Colonic mucosa (tissue), 4 donors: ENCODE measurements at regions of chr1 and their contacts with region 1.

Region 1: GRCh38 chr1:100921109-100921706 is 25.3 kb downstream of the SLC30A7 start:
- DNase-seq: no peak
- H3K4me3 ChIP-seq: no peak overlapping the region
- H3K27ac ChIP-seq: no peak overlapping the region
- H3K4me1 ChIP-seq: no peaks in the 10 kb centered on the region
- H3K27me3 ChIP-seq: no peaks in the 10 kb centered on the region
- CTCF ChIP-seq: peak; percentile 71

Region 2: DNA sequence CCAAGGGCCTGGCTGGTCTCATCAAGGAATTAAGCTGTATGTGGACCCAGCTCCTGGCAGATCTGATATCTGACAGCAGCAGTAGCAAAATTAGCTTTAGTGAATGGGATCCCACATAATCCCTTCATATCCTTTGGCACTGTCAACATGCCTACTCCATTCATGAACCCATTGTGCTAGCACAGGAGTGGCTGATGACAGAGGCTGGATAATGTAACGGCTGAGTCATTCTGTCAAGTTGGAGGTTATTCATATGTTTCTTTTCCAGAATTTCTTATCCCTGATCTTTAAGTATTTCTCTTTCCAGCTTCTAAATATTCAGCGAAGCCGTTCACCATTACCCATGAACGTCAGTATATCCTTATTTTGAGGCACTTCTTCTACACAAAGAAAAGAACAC is 110.8 kb before region 1 on chr1:
- intact Hi-C with region 1: no loop called
- DNase-seq: no peak
- H3K4me3 ChIP-seq: no peak overlapping the region
- H3K27ac ChIP-seq: no peak overlapping the region
- H3K4me1 ChIP-seq: no peaks in the 10 kb centered on the region
- H3K27me3 ChIP-seq: no peaks in the 10 kb centered on the region
- CTCF ChIP-seq: no peak

Region 3: GRCh38 chr1:101039245-101039644 is 118.0 kb after region 1 on chr1:
- intact Hi-C with region 1: loop called (anchors 10 kb)
- DNase-seq: no peak
- H3K4me3 ChIP-seq: no peak overlapping the region
- H3K27ac ChIP-seq: no peak overlapping the region
- H3K4me1 ChIP-seq: no peaks in the 10 kb centered on the region
- H3K27me3 ChIP-seq: no peaks in the 10 kb centered on the region
- CTCF ChIP-seq: no peak

Region 4: DNA sequence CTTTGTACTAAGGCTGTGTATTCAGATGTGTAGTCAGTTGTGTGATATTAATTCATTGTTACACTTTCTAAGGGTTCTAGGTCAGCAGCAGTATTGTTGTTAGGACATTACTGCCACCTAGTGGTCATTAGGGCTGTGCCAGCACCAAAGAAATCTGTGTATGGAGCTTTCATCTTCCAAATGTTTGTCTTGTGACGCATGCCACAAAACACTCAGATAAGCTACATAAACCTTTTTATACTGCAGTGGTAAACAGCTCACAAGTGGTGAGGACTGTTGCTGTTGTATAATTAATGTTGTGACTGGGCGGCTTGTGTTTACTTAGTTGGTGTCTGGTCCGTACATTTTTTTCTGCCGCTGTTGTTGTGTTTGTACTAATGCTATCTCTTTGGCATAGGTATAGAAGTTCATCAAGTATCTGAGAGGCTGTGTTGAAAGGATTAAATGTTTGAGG is 367.3 kb after region 1 on chr1:
- intact Hi-C with region 1: loop called (anchors 5 kb)
- DNase-seq: peak; percentile 70
- H3K4me3 ChIP-seq: no peak overlapping the region
- H3K27ac ChIP-seq: no peak overlapping the region
- H3K4me1 ChIP-seq: no peaks in the 10 kb centered on the region
- H3K27me3 ChIP-seq: no peaks in the 10 kb centered on the region
- CTCF ChIP-seq: peak; percentile 96